Dendritic cell treated with granulocyte-macrophage colony-stimulating factor and Interleukin-4, amounts not matched to agents 40 ng/mL and 50 ng/mL, for 4 days (primary cell): ENCODE measurements at regions of chr15 and their contacts with region 1.

Region 1: GRCh38 chr15:55221090-55222011 is 24.6 kb upstream of the RSL24D1 start:
- H3K4me3 Mint-ChIP-seq: peak overlapping the region; percentile 61
- H3K27ac Mint-ChIP-seq: peak overlapping the region; percentile 65
- H3K4me1 Mint-ChIP-seq: peaks cover 39% of the 10 kb centered on the region
- H3K27me3 Mint-ChIP-seq: no peaks in the 10 kb centered on the region

Region 2: GRCh38 chr15:55255714-55256113 is 34.4 kb after region 1 on chr15:
- intact Hi-C with region 1: loop called (anchors 5 kb)
- H3K4me3 Mint-ChIP-seq: peak overlapping the region; percentile 19
- H3K27ac Mint-ChIP-seq: no peak overlapping the region
- H3K4me1 Mint-ChIP-seq: peaks cover 80% of the 10 kb centered on the region
- H3K27me3 Mint-ChIP-seq: no peaks in the 10 kb centered on the region

Region 3: DNA sequence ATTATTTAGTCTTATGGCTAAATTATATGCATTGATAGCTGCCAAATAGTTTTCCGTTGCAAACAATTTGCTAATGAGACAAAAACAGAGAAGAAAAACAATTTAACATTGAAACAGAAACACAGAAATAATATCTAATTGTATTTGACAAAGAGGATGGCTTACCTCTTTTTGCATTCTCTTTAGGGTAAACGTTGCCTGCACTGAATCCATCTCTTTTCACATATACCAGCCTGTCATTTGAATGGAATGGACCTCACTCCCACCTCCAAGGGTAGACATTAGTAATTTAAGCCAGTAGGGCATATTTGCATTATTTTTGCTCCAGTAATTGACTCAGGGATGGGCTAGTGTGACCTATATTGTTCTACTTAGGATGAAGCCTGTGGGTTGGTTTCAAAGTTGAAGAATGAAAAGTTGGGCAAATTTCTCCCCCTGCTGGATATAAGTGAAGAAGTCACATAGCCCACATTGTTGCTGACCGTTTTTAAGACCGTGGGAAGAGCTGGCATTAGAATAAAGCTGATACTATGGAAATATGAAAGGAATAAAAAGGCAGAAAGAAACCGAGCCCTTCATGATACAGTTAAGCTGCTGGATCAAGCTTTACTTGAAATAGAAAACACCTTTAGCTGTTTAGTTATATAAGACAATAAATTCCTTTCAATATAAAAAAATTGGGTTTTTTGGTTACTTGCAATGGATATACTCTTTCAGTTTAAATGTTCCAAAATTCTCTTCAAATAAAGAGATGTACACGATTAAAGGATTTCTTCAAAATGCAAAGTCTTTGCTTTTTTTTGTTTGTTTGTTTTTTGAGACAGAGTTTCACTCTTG is 213.9 kb after region 1 on chr15:
- intact Hi-C with region 1: loop called (anchors 2 kb)
- H3K4me3 Mint-ChIP-seq: no peak overlapping the region
- H3K27ac Mint-ChIP-seq: no peak overlapping the region
- H3K4me1 Mint-ChIP-seq: no peaks in the 10 kb centered on the region
- H3K27me3 Mint-ChIP-seq: no peaks in the 10 kb centered on the region